Lower lobe of right lung (tissue), 2 donors: ENCODE measurements at regions of chr10 and their contacts with region 1.

Region 1: GRCh38 chr10:59808896-59809643 is 55.8 kb upstream of the MRLN start:
- DNase-seq: peak; percentile 78
- ATAC-seq: peak; percentile 69 to 77
- H3K4me3 ChIP-seq: no peak overlapping the region
- H3K27ac ChIP-seq: no peak overlapping the region
- H3K4me1 ChIP-seq: peaks cover 8% of the 10 kb centered on the region
- H3K27me3 ChIP-seq: no peaks in the 10 kb centered on the region
- CTCF ChIP-seq: peak; percentile 62

Region 2: DNA sequence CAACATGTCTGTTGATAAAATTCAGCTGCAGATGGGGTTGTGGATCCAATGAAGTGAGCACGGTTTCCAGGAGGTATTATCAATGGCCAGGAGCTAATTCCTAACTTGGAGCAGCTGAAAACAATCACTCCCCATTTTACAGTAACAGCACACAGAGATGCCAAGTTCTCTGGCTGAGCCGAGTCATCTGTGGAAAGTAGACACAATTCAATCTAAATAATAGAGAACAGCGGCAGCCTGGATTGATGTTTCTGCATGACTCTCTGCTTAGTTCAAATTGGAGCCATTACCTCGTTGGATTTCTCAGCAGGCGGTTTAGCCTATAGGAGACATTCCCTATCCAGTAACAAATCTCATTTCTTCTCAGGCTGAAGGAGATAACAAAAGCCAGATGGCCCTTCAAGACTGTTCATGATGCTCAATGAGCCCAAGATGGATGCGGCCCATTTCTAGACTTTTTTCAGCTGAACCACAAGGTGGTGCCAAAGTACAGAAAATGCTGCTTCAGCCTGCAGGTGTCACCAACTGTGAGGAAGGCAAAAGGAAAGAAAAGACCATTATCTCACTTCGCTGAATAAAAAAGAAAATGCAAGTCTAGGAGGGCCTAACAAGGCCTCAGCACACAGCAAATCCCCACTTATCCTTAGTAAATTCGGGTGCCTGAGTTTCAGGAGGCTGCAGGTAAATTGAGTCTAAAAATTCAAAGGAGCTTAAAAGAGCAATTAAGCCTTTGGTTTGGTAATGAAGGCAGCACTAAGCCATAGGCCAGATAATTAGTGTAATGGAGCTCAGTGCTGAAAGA is 183.1 kb before region 1 on chr10:
- intact Hi-C with region 1: loop called (anchors 10 kb)
- DNase-seq: no peak
- ATAC-seq: peak; percentile 81 to 84
- H3K4me3 ChIP-seq: no peak overlapping the region
- H3K27ac ChIP-seq: no peak overlapping the region
- H3K4me1 ChIP-seq: no peaks in the 10 kb centered on the region
- H3K27me3 ChIP-seq: no peaks in the 10 kb centered on the region
- CTCF ChIP-seq: peak; percentile 80